H1 (cell line): ENCODE measurements at regions of chr1 and their contacts with region 1.

Region 1: DNA sequence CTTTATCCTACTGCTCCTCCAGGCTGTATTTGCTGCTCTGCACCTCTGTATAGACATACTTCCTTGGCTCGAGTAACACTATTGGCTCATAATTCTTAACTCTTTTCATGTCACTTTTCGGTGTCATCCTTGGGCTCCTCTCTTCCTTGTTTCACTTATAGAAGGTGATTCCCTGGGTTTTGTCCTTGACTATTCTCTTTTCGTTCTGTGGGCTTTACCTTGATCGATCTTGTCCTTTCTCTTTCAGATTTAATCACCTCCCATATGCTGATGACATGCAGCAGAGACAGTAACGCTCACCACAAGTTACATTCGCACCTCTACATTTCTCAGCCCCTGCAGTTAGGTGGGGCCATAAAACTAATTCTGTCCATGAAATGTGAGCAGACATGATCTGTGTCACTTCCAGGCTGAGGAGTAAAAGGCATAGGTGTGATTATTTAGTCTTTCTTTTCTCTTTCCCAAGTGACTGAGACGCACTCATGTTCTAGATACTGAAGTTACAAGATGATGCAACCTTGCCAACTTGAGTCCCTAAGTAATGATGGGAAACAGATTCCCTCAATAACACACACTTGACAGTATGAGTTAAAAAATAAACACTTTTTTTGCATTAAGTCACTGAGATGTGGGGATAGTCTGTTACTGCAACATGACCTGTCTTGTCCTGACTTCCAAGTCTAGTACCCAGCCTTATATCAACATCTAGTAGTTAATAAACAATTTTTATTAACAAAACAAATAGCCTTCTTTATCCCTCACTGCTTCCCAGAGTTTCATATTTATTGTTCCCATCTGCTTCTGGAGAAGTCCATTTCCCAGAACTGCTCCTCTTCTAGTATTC is 49.9 kb upstream of the HAO2 start:
- DNase-seq: no peak
- H3K4me3 ChIP-seq: no peak overlapping the region
- H3K27ac ChIP-seq: no peak overlapping the region
- H3K4me1 ChIP-seq: peaks cover 0 to 3% (median 0%) of the 10 kb centered on the region in 4 experiments; a peak in 1 of 7 replicates
- H3K27me3 ChIP-seq: no peaks in the 10 kb centered on the region; a peak in 1 of 7 replicates
- CTCF ChIP-seq: no peak
- EP300 ChIP-seq: no peak
- POLR2A ChIP-seq: no peak
- RAD21 ChIP-seq: no peak

Region 2: DNA sequence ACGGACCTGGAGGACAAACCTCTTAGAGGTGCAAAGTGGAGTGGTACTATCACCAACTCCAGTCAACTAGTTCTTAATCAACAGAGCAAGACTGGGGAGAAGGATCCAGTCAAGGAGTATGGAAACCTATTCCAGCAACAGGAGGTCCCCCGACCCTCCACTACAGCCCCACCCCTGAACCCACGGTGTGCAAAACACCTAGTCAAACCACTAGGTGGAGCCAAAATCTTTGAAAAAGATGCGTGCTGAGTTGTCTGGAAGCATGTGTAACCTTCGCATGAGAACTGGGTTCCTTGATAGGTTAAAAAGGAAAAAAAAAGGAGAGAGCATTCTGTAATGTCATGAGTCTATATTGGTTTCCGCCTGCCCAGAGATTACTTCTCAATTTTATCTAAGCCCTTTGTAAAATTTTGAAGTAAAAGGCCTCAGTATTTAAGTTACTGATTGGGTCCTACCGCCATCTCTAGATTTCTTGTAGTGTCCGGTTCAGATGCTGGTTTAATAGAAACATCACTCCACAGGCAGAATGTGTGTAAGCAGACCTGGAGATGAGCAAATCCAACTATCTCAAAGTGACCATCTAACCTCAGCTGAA is 32.0 kb before region 1 on chr1:
- CTCF ChIA-PET with region 1: interaction called, 16 read pairs
- POLR2A ChIA-PET with region 1: no interaction called
- DNase-seq: peak in 1 of 2 experiments; percentile 66
- H3K4me3 ChIP-seq: no peak overlapping the region
- H3K27ac ChIP-seq: no peak overlapping the region
- H3K4me1 ChIP-seq: no peaks in the 10 kb centered on the region
- H3K27me3 ChIP-seq: no peaks in the 10 kb centered on the region
- CTCF ChIP-seq: peak; percentile 61 to 84 (median 79)
- EP300 ChIP-seq: no peak
- POLR2A ChIP-seq: no peak
- RAD21 ChIP-seq: peak; percentile 92 to 93

Region 3: DNA sequence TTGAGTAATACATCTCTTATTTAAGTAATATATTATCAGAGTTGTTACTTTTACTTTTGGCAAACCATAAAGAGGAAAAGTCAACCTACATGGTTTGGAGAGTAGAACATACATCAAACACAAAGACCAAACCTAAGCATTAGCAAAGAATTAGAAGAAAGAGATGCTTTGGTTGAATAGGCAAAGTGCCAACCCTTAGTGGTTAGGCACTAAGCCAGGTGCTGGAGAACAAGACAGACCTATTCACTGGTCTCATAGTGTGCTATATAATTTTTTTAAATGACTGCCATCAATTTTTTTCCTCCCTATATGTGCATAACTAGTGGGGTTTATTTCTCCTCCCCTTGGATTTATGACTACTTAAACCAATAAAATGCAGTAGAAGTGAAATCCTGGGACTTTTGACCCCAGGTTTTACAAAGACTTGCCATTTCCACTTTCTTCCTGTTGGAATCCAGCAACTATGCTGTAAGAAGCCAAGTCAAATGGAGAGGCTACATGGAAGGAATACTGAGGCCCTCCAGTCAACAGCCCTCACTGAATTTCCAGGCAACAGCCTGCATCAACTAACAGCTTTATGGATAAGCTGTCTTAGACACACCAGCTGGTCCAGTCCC is 19.9 kb before region 1 on chr1:
- CTCF ChIA-PET with region 1: interaction called, 62 read pairs
- POLR2A ChIA-PET with region 1: interaction called, 5 read pairs
- DNase-seq: no peak
- H3K4me3 ChIP-seq: no peak overlapping the region
- H3K27ac ChIP-seq: no peak overlapping the region
- H3K4me1 ChIP-seq: peaks cover 2 to 10% (median 6%) of the 10 kb centered on the region in 4 experiments; a peak in 6 of 7 replicates
- H3K27me3 ChIP-seq: peaks cover 0 to 2% (median 0%) of the 10 kb centered on the region in 4 experiments; a peak in 1 of 7 replicates
- CTCF ChIP-seq: no peak
- EP300 ChIP-seq: no peak
- POLR2A ChIP-seq: no peak
- RAD21 ChIP-seq: no peak

Region 4: DNA sequence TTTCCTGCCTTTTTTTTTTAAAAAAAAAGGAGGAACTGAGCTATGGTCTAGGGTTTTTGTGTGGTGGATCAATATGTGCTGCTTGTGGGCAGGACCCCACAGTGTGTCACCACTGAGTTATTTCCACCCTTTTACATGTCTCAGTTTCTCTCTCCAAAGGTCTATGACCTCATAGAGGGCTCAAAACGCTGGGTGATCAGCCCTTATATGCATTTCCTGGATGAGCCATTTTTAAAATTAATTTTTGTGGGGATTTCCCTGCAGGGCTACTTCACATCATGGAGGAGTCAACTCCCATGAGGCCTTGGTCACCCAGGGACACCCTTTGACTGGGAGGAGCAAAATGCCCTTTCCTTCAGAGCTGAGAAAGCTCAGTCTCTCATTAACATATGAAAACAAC is 29.2 kb after region 1 on chr1:
- CTCF ChIA-PET with region 1: interaction called, 11 read pairs
- POLR2A ChIA-PET with region 1: no interaction called
- DNase-seq: no peak
- H3K4me3 ChIP-seq: no peak overlapping the region
- H3K27ac ChIP-seq: no peak overlapping the region
- H3K4me1 ChIP-seq: peaks cover 0 to 4% (median 2%) of the 10 kb centered on the region in 4 experiments; a peak in 2 of 7 replicates
- H3K27me3 ChIP-seq: no peaks in the 10 kb centered on the region
- CTCF ChIP-seq: no peak
- EP300 ChIP-seq: no peak
- POLR2A ChIP-seq: no peak
- RAD21 ChIP-seq: no peak

Region 5: GRCh38 chr1:119358636-119359035 is 39.9 kb after region 1 on chr1:
- CTCF ChIA-PET with region 1: interaction called, 20 read pairs
- POLR2A ChIA-PET with region 1: no interaction called
- DNase-seq: no peak
- H3K4me3 ChIP-seq: no peak overlapping the region
- H3K27ac ChIP-seq: no peak overlapping the region
- H3K4me1 ChIP-seq: peaks cover 0 to 2% (median under 1%) of the 10 kb centered on the region in 4 experiments; a peak in 1 of 7 replicates
- H3K27me3 ChIP-seq: no peaks in the 10 kb centered on the region
- CTCF ChIP-seq: no peak
- EP300 ChIP-seq: no peak
- POLR2A ChIP-seq: no peak
- RAD21 ChIP-seq: no peak

Region 6: DNA sequence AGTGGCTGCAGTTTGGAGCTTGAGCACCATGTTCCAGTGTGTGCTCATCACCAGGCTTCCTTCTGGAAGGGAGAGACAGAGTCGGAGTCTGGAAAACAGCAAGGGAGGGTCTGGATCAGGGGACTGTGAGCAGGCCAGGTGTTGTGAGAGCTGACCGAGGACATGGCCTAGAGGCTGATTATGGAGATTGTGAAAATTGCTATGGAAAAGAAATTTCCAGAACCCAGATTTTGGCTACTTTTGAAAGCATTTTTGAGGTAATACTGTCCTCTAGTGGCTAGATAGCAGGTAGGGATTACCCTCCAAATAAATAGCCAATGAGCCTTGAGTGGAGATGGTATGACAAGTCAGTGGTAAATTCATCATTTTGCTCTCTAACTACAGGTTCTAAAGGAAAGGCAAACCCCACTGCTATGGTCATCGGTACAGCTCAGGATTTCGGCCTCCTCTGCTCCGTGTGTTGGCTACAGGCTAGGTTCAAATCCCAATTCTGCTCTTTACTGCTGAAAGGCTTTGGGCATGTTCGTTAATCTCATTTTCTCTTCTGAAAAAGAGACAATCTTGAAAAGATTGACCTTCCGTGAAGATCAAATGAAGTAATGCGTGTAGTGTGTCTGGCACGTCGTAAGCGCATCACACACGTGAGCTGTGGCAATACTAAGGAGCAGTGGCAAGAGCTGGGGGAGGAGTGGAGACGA is 48.9 kb after region 1 on chr1:
- CTCF ChIA-PET with region 1: interaction called, 72 read pairs
- POLR2A ChIA-PET with region 1: interaction called, 4 read pairs
- DNase-seq: no peak
- H3K4me3 ChIP-seq: no peak overlapping the region
- H3K27ac ChIP-seq: no peak overlapping the region
- H3K4me1 ChIP-seq: peaks cover 0 to 3% (median 2%) of the 10 kb centered on the region in 4 experiments; a peak in 3 of 7 replicates
- H3K27me3 ChIP-seq: no peaks in the 10 kb centered on the region; a peak in 1 of 7 replicates
- CTCF ChIP-seq: peak in 2 of 3 experiments; percentile 83 to 96; a peak in 3 of 4 replicates
- EP300 ChIP-seq: no peak
- POLR2A ChIP-seq: no peak
- RAD21 ChIP-seq: peak; percentile 100